IMR-90 (cell line): ENCODE measurements at regions of chr13 and their contacts with region 1.

Region 1: DNA sequence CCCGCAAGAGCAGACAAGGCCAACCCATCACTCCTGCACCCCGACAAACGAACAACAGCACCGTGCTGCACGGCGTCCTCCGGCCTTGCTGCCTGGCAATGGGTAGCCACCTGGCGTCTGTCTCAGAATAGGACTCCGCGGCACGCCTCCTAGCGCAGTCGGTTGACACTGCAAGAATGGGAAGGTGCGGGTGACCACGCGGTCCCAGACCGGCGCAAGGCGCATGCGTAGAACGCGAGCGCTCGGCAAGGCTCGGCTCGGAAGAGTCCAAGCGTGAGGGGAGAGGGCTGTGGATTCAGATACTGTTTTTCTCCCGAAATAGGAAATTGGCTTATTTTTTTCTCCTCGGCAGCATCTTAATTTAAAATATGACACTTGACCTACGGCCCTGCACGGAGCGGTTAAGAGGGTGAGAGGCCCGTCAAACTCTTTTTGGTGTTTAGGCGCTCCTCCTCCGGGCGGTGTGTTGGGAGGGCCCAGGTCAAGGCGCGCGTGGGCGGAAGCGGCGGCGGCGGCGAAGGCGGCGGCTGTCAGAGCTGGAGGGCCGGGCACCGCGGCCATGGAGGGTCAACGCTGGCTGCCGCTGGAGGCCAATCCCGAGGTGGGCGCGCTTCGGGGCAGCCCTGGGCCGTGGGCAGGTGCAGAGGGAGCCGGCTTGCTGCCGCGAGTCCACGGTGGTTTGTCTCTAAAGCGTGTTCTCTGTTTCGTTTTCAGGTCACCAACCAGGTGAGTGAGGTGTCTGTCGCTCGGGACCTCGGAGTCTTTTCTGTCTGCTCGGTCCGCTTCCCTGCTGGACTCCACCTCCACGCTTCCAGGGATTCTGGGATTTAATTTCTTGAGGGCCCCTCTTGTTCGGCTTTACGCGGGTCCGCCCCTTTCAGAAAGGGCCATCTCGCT is at the start of gene UCHL3:
- DNase-seq: peak; percentile 95
- ATAC-seq: peak; percentile 96
- H3K4me3 ChIP-seq: peak within 1 kb of the TSS; percentile 83
- H3K27ac ChIP-seq: peak within 1 kb of the TSS; percentile 94
- H3K4me1 ChIP-seq: peaks cover 2% of the 10 kb centered on the region; the same call in 1 of the 2 replicates
- H3K27me3 ChIP-seq: no peaks in the 10 kb centered on the region
- CTCF ChIP-seq: peak; percentile 98
- POLR2A ChIP-seq: no peak; the same call in 1 of the 2 replicates
- RAD21 ChIP-seq: peak; percentile 79
- total RNA-seq, gene UCHL3: 60.8 and 63.8 TPM in 2 replicates

Region 2: DNA sequence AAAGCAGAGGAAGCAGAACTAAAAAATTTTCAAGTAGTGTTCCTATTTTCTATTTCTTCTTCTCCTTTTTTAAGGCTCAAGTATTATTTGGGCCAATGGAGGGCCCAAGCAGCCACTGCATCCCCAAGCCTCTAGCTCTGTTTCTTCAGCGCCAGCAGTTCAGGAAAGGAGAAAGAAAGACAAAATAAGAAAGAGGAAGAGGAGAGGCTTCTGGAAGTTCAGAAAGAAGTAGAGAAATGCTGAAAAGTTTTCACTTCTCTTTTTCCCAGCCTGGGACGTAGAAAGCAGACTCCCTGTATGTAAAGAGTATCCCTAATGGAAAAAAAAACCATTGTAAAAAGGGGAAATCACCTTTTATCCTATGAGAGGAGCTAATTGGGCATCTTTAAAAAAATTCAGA is 1249.8 kb before region 1 on chr13:
- CTCF ChIA-PET with region 1: no interaction called
- POLR2A ChIA-PET with region 1: no interaction called
- dilution Hi-C with region 1: no loop called
- in situ Hi-C with region 1: no loop called
- intact Hi-C with region 1: loop called (anchors 5 kb)
- DNase-seq: no peak
- ATAC-seq: no peak
- H3K4me3 ChIP-seq: no peak overlapping the region
- H3K27ac ChIP-seq: no peak overlapping the region
- H3K4me1 ChIP-seq: no peaks in the 10 kb centered on the region
- H3K27me3 ChIP-seq: no peaks in the 10 kb centered on the region
- CTCF ChIP-seq: no peak
- POLR2A ChIP-seq: no peak
- RAD21 ChIP-seq: no peak

Region 3: DNA sequence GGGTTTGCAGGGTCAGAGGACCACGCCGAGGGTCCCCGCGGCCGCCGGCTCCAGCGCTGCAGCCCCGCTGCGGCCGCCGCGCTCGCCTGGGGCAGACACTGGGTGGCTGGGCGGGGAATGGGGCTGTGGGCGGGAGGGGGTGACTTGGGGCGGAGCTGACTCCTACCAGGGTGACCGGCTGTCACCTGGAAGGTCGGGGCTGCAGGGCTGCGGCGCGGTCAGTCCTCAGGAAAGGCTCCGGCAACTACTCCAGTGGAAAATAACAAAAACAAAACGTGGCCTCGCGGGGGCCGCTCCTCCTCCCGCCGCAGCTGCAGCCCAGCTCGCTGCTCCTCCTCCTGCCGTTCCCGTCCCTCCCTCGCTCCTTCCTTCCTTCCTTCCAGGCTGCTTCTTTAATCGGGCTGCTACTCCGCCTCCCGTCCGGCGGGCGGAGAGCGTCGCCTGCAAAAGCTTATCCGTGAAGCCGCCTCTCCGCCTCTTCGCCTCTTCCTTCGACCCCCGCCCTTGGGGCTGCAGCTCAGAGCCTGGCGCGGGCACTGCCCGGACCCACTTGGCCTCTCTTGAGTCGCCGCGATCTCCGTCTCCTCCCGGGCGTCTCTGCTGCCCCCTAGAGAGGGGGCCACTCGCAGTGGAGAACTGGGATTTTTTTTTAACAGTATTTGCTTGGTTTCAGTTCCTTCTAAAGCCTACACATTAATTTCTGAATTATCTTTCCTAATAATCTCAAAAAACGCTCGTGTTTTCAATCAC is 67.3 kb before region 1 on chr13 and contains the start of gene TBC1D4:
- CTCF ChIA-PET with region 1: no interaction called
- POLR2A ChIA-PET with region 1: no interaction called
- dilution Hi-C with region 1: no loop called
- in situ Hi-C with region 1: loop called (anchors 5 kb)
- intact Hi-C with region 1: loop called (anchors 1 kb)
- DNase-seq: peak; percentile 82
- ATAC-seq: peak; percentile 86
- H3K4me3 ChIP-seq: peak within 1 kb of the TSS; percentile 49
- H3K27ac ChIP-seq: peak within 1 kb of the TSS; percentile 25
- H3K4me1 ChIP-seq: peaks cover 3% of the 10 kb centered on the region; the same call in 1 of the 2 replicates
- H3K27me3 ChIP-seq: no peaks in the 10 kb centered on the region
- CTCF ChIP-seq: peak; percentile 84
- POLR2A ChIP-seq: 0 out of 2 replicates have a peak, but pooled peaks have one; percentile 39
- RAD21 ChIP-seq: peak; percentile 57
- total RNA-seq, gene TBC1D4: 11.4 and 22.8 TPM in 2 replicates

Region 4: GRCh38 chr13:75803164-75803611 is 253.7 kb after region 1 on chr13:
- CTCF ChIA-PET with region 1: no interaction called
- POLR2A ChIA-PET with region 1: no interaction called
- dilution Hi-C with region 1: no loop called
- in situ Hi-C with region 1: loop called (anchors 25 kb)
- intact Hi-C with region 1: no loop called
- DNase-seq: no peak
- ATAC-seq: no peak
- H3K4me3 ChIP-seq: no peak overlapping the region
- H3K27ac ChIP-seq: peak overlapping the region; percentile 68; the same call in 1 of the 2 replicates
- H3K4me1 ChIP-seq: peaks cover 10% of the 10 kb centered on the region
- H3K27me3 ChIP-seq: no peaks in the 10 kb centered on the region
- CTCF ChIP-seq: no peak
- POLR2A ChIP-seq: no peak
- RAD21 ChIP-seq: no peak